GM13977 (cell line): ENCODE measurements at regions of chr13 and their contacts with region 1.

Region 1: DNA sequence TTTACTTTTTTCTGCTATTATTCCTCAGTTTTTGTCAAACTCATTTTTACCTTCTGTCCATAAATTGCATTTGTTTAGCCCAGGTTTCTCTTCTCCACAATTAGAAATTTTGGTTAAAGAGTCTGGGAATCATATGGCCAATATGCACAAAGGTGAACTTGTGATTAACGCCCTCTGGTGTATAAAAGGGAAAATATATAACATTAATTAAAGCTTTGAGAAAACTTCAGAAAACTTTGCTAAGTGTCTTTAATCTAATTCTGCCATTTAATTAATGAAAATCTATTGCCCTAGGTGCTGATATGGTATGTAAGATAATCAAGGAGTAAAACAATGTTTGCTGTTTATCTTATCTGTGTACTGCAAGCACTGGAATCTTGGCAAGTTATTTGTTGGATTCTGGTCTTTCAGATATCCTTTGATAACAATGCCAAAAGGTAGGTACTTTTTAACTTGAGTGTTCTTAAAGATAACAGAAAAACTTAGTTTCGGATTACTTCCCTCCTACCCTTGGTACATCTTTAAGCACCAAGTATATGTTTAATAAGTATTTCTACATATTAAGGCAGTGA is 402.6 kb downstream of the SUCLA2 start:
- DNase-seq: no peak
- CTCF ChIP-seq: peak; percentile 11

Region 2: DNA sequence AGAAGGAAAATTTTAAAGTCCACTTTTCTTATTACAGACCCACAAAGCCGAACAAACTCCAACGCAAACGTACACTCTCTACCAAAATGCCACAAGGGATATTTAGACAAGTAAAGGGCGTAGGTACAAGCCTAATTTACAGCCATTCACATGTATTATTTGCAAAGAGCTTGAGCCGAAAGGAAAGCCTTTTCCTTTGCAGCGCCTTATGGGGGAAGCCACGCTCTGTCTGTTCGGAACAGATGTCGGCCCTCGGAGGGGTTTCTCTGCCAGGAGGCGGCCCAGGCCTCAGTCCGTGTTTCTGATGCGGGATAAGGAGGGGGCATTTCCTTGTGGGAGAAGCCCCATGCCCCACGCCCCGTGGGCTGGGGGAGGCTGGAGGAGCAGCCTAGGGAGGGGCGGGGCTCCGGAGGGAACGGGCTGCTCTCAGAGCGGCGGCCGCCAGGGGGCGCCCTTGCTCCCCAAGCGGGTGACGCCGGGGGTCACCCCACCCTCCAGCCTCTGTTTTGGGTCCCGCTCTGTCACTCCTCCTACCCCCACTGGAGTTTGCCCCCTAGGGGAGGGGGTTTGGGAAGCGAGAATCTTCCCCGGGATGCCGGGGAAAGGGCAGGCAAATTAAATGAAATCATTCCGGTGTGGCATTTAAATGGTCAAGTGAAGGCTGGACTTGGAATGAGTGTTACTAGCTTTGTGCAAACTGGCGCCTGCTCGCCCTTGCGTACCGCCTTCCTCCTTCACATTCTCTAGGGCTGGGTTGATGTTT is 704.4 kb before region 1 on chr13:
- in situ Hi-C with region 1: loop called (anchors 25 kb)
- DNase-seq: peak; percentile 82
- CTCF ChIP-seq: peak; percentile 84

Region 3: GRCh38 chr13:47650209-47650608 is 51.8 kb after region 1 on chr13:
- in situ Hi-C with region 1: no loop called
- DNase-seq: no peak
- CTCF ChIP-seq: no peak

Region 4: DNA sequence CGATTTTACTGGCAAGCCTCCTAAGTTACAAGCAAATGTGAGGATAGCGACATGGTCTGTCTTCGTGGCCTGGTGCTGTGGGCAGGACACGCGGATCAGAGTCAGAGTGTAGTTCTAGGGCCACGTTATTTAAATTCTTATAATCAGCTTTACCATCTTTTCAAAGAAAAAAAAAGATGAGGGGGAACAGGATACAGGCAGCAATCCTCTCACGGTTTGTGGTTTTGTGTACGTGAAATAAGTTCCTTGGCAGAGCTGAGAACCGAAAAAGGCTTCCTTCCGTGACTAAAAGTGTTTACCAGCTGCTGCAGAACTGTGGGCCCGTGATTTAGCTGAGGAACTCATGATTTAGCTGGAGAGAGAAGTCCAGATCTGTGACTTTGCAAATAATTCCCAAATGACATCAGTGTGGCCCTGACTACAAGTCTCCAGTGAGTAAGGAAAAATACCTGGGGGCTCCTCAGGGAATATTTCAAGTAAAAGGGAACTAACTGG is 907.2 kb after region 1 on chr13:
- in situ Hi-C with region 1: no loop called
- DNase-seq: peak; percentile 63
- CTCF ChIP-seq: no peak